GM13977 (cell line): ENCODE measurements at regions of chr17 and their contacts with region 1.

Region 1: GRCh38 chr17:21400816-21401593 is 24.8 kb downstream of the KCNJ12 start:
- DNase-seq: no peak
- CTCF ChIP-seq: no peak

Region 2: DNA sequence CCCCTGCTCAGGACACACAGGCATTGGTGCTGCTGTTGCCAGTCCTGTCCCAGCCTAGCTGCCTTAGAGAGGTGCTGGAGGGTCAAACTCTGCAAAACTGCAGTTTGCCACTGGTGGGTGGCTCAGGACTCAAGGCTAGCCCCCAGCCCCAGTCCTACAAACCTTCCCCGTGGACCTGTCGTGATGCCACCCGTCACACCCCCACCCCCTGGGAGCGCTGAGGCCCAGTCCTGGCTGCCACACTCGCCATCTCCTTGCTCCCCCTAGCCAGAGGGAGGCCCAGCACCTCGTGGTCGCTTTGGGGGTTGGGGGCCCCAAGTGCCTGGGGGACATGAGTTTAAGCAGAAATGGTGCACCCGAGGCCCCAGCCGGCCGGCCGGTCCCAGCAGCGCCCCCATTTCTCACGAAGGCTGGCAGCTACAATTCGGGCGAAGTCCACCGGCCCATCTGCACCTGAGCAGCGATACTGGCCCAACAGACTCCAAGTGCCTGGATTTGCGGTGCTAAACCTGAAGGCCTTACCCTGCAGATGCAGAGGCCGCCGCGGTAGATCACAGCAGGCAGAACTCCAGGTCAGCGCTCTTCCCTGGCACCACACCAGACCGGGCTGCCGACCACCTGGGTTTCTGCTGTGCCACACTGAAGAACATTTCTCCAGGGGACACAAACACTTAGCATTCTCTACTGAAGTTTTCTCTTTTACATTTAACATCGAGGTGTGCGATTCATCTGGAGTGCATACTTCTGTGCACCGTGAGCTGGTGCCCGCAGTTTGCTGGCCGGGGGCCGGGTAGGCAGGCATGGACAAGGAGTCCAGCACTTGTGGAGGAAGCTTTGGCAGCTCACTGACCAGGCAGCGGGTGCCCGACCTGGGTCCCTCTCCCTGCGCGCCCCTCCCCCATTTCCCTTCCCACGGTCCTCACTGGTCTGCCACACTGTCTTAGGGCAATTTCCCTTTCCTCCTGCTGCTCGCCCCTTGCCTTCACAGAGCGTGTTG is 105.1 kb after region 1 on chr17:
- in situ Hi-C with region 1: no loop called
- DNase-seq: no peak
- CTCF ChIP-seq: no peak

Region 3: DNA sequence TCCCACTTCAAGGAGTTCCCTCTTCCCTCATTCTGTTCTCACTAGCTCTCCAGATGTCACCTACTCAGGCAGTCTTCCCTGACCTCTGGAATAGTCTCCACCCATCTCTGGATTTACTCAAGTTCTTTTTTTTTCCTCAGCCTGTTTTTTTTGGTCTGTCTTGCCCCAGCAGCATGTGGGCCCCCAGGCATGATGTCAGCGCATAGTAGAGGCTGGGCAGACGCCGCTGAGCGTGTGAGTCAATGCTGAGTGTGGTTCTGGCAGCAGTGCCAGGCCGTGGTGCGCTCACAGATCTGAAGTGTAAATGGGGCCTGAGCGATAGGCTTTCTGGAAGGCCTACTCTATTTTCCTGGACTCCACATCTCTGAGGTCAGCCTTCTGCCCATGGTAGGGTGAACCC is 288.6 kb after region 1 on chr17:
- in situ Hi-C with region 1: loop called (anchors 5 kb)
- DNase-seq: no peak
- CTCF ChIP-seq: no peak